ENCODE measurements at regions of chr15 and their contacts with region 1.

Region 1: DNA sequence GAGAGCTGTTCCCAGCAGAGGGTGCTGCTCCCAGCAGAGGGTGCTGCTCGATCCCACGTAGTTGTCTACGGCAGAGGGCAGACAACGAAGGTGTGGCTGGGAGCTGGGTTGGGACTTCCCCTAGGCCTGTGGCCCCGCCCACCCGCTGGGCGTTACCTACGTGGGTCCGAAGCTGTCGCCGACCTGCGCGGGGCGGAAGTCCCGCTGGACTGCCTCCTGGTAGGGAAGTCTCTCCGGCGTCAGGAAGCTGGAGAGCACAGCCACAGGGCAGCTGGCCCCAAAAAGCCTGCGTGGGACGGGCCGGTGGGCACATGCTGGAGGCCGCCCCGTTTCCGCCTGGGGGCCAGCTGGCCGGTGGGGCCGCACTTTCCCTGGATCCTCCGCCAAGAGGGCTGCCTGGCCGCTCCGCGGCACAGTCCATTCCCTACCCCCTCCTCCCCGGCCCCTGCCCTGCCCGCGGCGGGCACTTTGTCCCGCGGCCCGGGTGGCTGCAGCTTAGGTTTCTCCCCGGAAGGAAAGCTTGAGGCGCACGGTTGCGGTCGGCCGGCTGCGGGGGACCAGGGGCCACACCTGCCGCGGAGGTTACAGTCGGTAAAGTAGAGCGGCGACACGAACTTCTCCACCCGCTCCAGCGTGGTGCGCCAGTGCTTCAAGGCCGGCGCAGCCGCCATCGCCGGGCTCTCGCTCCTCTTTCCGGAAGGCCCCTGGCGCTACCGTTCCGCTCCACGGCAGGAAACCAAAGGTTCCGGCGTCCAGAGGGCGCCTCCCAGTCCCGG is at the start of gene MAN2C1:
- DNase-seq: peak; percentile 98
- H3K4me3 Mint-ChIP-seq: peak within 1 kb of the TSS; percentile 91
- H3K27ac Mint-ChIP-seq: peak within 1 kb of the TSS; percentile 96
- H3K4me1 Mint-ChIP-seq: peaks cover 24% of the 10 kb centered on the region
- H3K27me3 Mint-ChIP-seq: no peaks in the 10 kb centered on the region
- total RNA-seq, gene MAN2C1: 232 and 255 TPM in 2 replicates

Region 2: DNA sequence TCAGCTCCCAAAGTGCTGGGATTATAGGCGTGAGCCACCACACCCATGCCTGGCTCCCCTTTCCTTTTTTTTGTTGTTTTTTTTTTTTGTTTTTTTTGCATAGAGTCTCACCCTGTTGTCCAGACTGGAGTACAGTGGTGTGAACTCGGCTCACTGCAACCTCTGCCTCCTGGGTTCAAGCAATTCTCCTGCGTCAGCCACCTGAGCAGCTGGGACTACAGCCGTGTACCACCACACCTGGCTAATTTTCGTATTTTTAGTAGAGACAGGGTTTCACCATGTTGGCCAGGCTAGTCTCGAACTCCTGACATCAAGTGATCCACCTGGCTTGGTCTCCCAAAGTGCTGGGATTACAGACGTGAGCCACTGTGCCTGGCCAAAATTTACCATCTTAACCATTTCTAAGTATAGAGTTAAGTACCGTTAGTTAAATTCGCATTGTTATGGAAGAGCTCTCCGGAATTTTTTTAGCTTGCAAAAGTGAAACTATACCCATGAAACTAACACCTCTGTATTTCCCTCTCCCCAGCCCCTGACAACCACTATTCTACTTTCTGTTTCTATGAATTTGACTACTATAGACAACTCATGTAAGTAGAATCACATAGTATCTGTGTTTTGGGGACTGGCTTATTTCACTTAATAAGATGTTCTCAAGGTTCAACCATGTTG is 237.4 kb before region 1 on chr15:
- intact Hi-C with region 1: no loop called
- DNase-seq: peak; percentile 82
- H3K4me3 Mint-ChIP-seq: peak overlapping the region; percentile 69
- H3K27ac Mint-ChIP-seq: peak overlapping the region; percentile 75
- H3K4me1 Mint-ChIP-seq: peaks cover 27% of the 10 kb centered on the region
- H3K27me3 Mint-ChIP-seq: peaks cover 3% of the 10 kb centered on the region

Region 3: GRCh38 chr15:75684642-75685041 is 316.5 kb after region 1 on chr15:
- intact Hi-C with region 1: loop called (anchors 1 kb)
- DNase-seq: no peak
- H3K4me3 Mint-ChIP-seq: no peak overlapping the region
- H3K27ac Mint-ChIP-seq: no peak overlapping the region
- H3K4me1 Mint-ChIP-seq: no peaks in the 10 kb centered on the region
- H3K27me3 Mint-ChIP-seq: no peaks in the 10 kb centered on the region